ENCODE measurements at regions of chr3 and their contacts with region 1.

Region 1: DNA sequence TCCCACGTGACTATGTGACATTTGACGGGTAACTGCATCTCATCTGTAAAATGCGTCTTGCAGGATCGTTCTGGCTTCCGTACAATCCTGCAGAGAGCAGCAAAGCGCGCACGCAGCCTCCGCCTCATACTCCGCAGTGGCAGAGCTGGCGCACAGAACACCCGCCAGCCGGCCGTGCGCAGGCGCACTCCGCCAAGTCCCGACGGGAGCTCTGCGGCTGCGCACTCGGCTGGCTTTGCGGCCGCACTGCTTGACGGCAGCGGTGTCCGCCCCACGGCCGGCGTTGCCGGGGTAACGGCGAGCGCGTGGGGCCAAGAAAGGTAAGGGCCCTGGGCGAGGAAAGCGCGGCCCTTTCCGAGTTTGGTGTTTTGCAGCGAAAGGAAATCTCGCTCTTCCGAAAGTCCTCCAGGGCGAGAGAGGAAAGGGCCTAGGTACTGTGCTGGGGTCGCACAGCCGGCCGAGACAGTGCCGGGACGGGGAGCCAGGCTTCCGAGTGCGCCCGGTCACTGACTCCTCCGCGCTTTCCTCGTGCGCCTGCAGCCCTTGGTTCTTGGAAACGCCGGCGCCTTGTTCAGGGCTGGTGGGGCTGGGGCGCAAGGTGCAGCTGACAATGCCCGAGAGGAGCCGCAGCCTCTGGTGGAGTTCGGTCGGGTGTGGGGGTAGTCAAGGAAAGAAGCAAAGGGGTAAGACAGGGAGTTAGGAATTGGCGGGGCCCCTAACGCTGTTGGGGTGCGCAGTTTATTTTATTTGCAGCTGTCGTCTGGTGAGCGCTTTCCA is at the start of gene TSEN2:
- DNase-seq: peak; percentile 98
- ATAC-seq: peak; percentile 97
- H3K4me3 Mint-ChIP-seq: peak within 1 kb of the TSS; percentile 96
- H3K27ac Mint-ChIP-seq: peak within 1 kb of the TSS; percentile 97
- H3K4me1 Mint-ChIP-seq: peaks cover 42% of the 10 kb centered on the region
- H3K27me3 Mint-ChIP-seq: no peaks in the 10 kb centered on the region
- total RNA-seq, gene TSEN2: 17.8 to 19.4 TPM

Region 2: GRCh38 chr3:11719406-11720230 is 764.8 kb before region 1 on chr3:
- CTCF ChIA-PET with region 1: no interaction called
- POLR2A ChIA-PET with region 1: no interaction called
- intact Hi-C with region 1: loop called in 1 of 2 experiments (anchors 1 kb)
- DNase-seq: peak; percentile 86
- ATAC-seq: peak; percentile 64
- H3K4me3 Mint-ChIP-seq: peak overlapping the region; percentile 91
- H3K27ac Mint-ChIP-seq: no peak overlapping the region
- H3K4me1 Mint-ChIP-seq: peaks cover 23% of the 10 kb centered on the region
- H3K27me3 Mint-ChIP-seq: peaks cover 11% of the 10 kb centered on the region

Region 3: DNA sequence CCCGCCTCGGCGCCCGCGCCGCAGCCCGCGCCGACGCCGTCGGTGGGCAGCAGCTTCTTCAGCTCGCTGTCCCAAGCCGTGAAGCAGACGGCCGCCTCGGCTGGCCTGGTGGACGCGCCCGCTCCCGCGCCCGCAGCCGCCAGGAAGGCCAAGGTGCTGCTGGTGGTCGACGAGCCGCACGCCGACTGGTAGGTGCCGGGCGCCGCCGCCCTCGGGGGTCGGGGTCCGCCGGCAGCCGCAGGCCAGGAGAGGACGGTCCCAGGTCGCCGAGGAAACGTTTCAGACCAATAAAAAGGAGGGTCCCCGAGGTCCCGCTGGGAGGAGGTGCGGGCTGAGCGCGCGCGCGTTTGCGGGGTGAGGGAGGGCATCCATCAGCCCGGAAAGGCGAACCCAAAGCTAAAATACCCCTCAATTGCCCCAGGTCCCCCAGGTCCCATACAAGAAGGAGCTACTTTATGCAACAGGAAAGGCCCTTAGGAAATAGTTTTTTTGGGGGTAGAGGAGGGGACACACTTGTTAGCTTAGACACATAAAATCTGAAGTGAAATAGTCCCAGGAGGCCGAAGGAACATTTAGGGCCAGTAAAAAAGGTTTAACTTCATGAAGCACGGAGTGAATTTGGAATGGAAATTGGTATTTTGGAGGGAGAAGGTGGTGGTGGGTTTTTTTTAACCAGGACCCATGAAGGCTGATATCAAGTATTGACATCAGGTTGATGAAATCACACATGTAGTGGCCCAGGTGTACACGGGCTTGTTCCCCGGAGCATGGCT is 479.5 kb before region 1 on chr3:
- CTCF ChIA-PET with region 1: no interaction called
- POLR2A ChIA-PET with region 1: no interaction called
- intact Hi-C with region 1: loop called in 1 of 2 experiments (anchors 10 kb)
- DNase-seq: peak; percentile 11
- ATAC-seq: no peak
- H3K4me3 Mint-ChIP-seq: no peak overlapping the region
- H3K27ac Mint-ChIP-seq: no peak overlapping the region
- H3K4me1 Mint-ChIP-seq: no peaks in the 10 kb centered on the region
- H3K27me3 Mint-ChIP-seq: peaks cover 51% of the 10 kb centered on the region

Region 4: DNA sequence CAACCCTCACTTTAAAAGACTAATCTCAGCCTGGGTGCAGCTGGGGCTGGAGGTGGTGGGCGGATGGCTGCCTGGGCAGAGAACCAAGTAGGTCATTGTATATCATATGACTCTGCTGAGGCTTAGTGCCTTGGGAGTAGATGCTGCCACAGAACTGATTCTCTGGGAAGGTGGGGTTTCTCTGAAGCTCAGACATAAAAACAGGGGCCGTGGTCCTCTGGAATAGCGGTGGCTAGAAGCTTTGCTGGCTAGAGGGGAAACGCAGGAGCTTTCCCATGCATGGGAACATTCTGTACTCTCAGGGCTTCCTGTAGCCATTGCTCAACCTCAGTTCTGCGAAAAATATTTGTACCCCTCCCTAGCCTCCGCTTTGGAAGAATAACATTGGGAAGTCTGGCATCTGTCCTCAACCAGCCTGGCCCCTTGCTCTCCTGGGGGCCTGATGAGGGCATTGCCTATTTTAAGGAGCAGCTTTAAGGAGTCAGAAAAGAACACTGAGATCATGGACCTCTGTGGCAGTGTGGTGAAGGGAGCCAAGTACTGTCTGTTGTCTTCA is 340.4 kb before region 1 on chr3:
- CTCF ChIA-PET with region 1: interaction called, 141 read pairs
- POLR2A ChIA-PET with region 1: no interaction called
- intact Hi-C with region 1: loop called in 1 of 2 experiments (anchors 1 kb)
- DNase-seq: no peak
- ATAC-seq: no peak
- H3K4me3 Mint-ChIP-seq: no peak overlapping the region
- H3K27ac Mint-ChIP-seq: no peak overlapping the region
- H3K4me1 Mint-ChIP-seq: no peaks in the 10 kb centered on the region
- H3K27me3 Mint-ChIP-seq: peaks cover 2% of the 10 kb centered on the region

Region 5: DNA sequence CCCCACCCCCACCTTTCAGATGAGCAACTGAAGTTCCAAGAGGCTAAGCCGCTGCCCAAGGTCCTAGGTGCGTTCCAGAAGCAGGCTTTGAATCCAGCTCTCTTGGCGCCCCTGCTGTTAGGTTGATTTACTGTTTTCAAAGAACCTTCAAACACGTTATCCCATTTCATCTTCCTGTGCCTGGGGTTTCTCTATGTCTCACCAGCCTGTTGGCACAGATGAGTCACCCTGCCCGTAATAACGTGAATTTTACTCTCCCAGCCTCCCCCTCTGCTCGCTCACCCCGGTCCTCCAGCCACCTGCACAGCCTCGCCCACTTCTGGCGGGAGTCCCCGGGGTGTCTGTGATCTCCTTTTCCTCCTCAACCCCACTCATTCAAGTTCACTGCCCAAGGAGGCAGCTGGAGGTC is 13.1 kb before region 1 on chr3:
- CTCF ChIA-PET with region 1: interaction called, 10 read pairs
- POLR2A ChIA-PET with region 1: no interaction called
- intact Hi-C with region 1: loop called in 1 of 2 experiments (anchors 1 kb)
- DNase-seq: peak; percentile 91
- ATAC-seq: peak; percentile 96
- H3K4me3 Mint-ChIP-seq: peak overlapping the region; percentile 12
- H3K27ac Mint-ChIP-seq: peak overlapping the region; percentile 81
- H3K4me1 Mint-ChIP-seq: peaks cover 36% of the 10 kb centered on the region
- H3K27me3 Mint-ChIP-seq: no peaks in the 10 kb centered on the region

Region 6: DNA sequence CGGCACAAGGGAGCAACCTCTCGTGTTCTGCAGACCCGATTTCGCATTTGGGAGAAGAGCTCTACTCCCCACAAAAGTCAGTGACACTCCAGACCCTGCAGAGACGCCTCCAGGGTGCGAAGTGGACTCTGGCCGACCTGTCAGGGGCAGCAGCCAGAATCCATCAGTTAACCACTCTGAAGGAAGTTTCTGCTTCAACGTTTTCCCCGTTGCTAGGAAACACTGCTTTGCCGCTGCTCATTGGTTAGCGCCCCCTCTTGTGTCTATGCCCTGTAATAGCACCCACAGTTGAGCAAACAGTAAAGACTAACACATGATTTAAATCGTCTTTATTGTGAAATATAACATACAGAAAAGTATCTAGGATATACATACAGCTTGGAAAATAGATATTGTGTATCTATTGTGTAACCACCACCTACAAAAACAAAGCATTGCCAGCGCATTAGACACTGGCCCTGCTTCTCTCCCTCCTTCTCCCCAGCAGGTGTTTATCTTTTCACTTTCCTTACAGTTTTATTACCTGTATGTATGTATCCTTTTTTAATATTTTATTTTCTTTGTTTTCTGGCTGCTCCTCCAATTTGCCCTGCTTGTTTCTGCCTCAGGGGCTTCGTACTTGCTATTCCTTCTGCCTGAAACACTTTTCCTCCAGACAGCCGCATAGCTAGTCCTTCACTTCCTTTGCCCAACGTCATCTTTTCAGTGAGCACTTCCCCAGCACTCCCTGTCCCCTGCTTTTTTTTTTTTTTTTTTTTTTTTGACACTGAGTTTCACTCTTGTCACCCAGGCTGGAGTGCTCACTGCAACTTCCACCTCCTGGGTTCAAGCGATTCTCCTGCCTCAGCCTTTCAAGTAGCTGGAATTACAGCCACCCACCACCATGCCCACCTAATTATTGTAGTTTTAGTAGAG is 235.9 kb after region 1 on chr3:
- CTCF ChIA-PET with region 1: no interaction called
- POLR2A ChIA-PET with region 1: no interaction called
- intact Hi-C with region 1: loop called (anchors 1 kb)
- DNase-seq: peak; percentile 80
- ATAC-seq: peak; percentile 74
- H3K4me3 Mint-ChIP-seq: peak overlapping the region; percentile 36
- H3K27ac Mint-ChIP-seq: no peak overlapping the region
- H3K4me1 Mint-ChIP-seq: peaks cover 9% of the 10 kb centered on the region
- H3K27me3 Mint-ChIP-seq: no peaks in the 10 kb centered on the region

Region 7: DNA sequence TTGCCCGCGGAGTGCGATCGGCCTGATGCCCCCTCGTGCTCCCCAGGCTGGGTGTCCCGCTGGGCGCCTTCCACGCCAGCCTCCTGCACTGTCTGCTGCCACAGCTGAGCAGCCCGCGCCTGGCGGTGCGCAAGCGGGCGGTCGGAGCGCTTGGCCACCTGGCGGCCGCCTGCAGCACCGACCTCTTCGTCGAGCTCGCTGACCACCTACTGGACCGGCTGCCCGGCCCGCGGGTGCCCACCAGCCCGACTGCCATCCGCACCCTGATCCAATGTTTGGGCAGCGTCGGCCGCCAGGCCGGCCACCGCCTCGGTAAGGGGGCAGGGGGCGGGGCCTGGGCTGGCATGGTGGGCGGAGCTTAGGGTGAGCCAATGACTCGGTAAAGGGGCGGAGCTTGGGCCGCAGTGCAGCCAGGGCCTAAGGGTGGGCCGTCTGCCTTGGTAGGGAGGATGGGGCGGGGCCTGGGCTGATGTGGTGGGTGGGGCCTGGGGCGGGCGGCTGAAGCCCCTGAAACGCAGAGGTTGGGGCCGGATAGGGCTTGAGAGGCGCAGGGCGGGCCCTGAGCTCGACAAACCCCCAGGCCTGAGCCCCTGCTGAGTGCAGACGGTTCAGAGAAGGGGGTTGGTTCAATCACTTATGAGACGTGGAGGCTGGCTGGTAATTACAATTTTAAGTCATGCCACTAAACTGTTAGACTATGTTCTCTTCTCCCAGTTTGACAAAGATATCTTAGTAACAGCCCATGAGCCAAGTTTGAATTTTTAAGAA is 325.8 kb after region 1 on chr3:
- CTCF ChIA-PET with region 1: no interaction called
- POLR2A ChIA-PET with region 1: no interaction called
- intact Hi-C with region 1: no loop called
- DNase-seq: peak; percentile 96
- ATAC-seq: peak; percentile 100
- H3K4me3 Mint-ChIP-seq: peak overlapping the region; percentile 50
- H3K27ac Mint-ChIP-seq: no peak overlapping the region
- H3K4me1 Mint-ChIP-seq: peaks cover 6% of the 10 kb centered on the region
- H3K27me3 Mint-ChIP-seq: no peaks in the 10 kb centered on the region

Region 8: DNA sequence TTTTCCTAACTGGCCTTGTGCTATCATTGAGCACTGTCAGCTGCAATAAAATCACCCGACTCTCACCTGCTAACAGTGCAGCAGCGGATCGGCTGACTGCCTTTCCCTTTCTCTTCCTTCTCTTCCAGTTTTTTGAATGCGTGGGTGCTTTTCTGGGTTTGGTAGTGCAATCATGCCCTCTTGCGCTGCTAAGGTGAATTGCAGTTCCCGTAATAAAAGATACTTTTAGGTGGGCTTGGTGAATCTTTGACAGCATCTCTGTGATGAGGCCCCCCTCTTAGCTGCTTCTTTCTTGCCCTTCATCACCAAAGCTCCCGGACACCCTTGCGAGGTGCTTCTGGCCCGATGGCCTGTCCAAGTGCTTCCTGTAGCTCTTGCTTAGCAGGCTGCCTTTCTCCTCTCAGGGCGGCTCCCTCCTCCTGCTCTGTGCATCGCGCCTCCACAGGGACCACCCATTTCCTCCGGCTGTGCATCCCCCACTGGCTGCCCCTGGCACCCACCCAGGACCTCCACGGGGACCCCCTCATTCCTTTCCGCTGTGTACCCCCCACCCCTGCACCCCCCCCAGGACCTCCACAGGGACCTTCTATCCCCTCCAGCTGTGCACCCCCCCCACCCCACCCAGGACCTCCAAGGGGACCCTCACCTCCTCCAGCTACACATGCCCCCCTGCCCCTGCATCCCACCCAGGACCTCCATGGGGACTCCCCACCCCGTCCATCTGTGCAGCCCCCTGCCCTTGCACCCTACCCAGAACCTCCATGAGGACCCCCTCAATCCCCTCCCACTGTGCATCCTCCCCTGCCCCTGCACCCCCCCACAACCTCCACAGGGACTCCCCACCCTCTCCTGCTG is 407.8 kb after region 1 on chr3:
- CTCF ChIA-PET with region 1: no interaction called
- POLR2A ChIA-PET with region 1: no interaction called
- intact Hi-C with region 1: loop called in 1 of 2 experiments (anchors 2 kb)
- DNase-seq: peak; percentile 64
- ATAC-seq: peak; percentile 58
- H3K4me3 Mint-ChIP-seq: no peak overlapping the region
- H3K27ac Mint-ChIP-seq: no peak overlapping the region
- H3K4me1 Mint-ChIP-seq: peaks cover 9% of the 10 kb centered on the region
- H3K27me3 Mint-ChIP-seq: peaks cover 12% of the 10 kb centered on the region